Ascending aorta (tissue), 2 donors: ENCODE measurements at regions of chr1 and their contacts with region 1.

Region 1: DNA sequence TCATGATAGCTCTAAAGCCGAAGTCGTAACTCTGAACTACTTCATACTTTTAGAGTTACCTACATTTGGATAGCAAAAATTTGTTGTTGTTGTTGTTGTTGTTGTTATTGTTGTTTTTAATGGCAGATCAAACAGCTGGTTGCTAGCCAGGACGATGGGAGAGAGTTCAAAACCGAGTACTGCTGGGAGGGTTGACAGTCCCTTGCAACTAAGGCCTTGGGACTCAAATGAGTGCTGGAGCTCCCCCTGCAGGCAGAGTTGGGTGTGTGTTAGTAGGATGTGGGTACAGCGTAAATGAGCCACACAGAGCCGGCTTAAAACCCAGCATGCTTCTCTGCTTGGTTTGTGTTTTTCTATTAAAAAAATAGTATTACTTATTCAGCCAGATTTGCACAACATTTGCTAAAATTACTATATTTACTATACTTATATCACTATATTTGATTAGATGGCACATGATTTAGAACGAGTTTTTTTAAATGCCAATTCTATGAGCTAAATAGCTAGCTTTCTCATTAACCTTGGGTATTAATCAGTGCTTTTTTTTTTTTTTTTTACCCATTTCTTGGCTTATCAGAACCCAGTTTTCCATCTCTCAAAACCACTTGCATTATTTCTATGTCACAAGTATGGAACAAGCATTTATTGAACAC is 129.2 kb upstream of the SYT6 start:
- DNase-seq: peak; percentile 48 to 93
- H3K4me3 ChIP-seq: no peak overlapping the region
- H3K27ac ChIP-seq: no peak overlapping the region
- H3K4me1 ChIP-seq: no peaks in the 10 kb centered on the region
- H3K27me3 ChIP-seq: no peaks in the 10 kb centered on the region
- CTCF ChIP-seq: peak; percentile 73 to 89 (median 77)

Region 2: DNA sequence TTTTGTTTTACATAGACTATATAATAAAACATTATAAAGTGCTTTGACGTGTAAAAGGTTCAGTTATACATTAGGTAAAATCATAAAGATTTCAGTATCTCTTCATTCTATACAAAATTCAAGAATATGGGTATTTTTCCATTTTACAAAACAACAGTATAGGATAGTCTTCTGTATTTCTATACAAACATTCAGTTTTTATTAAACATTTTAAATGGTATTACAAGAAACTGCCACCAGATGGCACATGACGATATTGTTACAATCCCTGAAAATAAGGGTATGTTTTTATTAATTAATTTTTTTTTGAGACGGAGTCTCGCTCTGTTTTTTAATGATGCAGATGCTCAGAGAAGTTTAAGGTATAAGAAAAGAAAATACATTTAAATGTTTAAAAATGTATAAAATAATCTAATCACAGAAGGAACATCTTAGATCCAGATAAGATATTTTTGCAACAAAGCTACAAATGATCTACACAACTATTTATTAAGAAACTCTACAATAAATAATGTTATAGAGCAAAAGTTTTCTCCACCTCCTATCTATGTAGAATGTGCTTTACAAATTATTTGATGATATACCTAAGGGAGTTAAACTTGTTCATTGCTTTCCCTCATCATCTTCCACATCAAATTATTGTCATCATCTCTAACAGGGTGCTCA is 447.1 kb before region 1 on chr1:
- intact Hi-C with region 1: loop called (anchors 2 kb)
- DNase-seq: no peak
- H3K4me3 ChIP-seq: no peak overlapping the region
- H3K27ac ChIP-seq: no peak overlapping the region
- H3K4me1 ChIP-seq: no peaks in the 10 kb centered on the region
- H3K27me3 ChIP-seq: no peaks in the 10 kb centered on the region
- CTCF ChIP-seq: peak; percentile 45 to 62 (median 46)

Region 3: GRCh38 chr1:114359750-114360149 is 76.9 kb after region 1 on chr1:
- intact Hi-C with region 1: no loop called
- DNase-seq: no peak
- H3K4me3 ChIP-seq: no peak overlapping the region
- H3K27ac ChIP-seq: no peak overlapping the region
- H3K4me1 ChIP-seq: no peaks in the 10 kb centered on the region
- H3K27me3 ChIP-seq: no peaks in the 10 kb centered on the region
- CTCF ChIP-seq: no peak